Naive thymus-derived CD4-positive, alpha-beta T cell (primary cell): ENCODE measurements at regions of chr2 and their contacts with region 1.

Region 1: GRCh38 chr2:207046724-207047123 is 107.4 kb downstream of the CPO start:
- DNase-seq: peak in 8 of 9 donors; percentile 24 to 69 (median 52)
- ATAC-seq: peak; percentile 79
- H3K4me3 ChIP-seq: no peak overlapping the region
- H3K4me3 Mint-ChIP-seq: peak overlapping the region in 8 of 10 donors; percentile 0 to 66 (median 12)
- H3K27ac ChIP-seq: no peak overlapping the region
- H3K27ac Mint-ChIP-seq: peak overlapping the region; percentile 2 to 78 (median 56)
- H3K4me1 ChIP-seq: peaks cover 0 to 4% of the 10 kb centered on the region in 2 donors
- H3K4me1 Mint-ChIP-seq: peaks cover 11 to 14% (median 13%) of the 10 kb centered on the region in 7 donors
- H3K27me3 ChIP-seq: no peaks in the 10 kb centered on the region
- H3K27me3 Mint-ChIP-seq: peaks cover 0 to 16% (median 0%) of the 10 kb centered on the region in 5 donors

Region 2: GRCh38 chr2:206981739-206982340 is 64.9 kb before region 1 on chr2:
- CTCF ChIA-PET with region 1: interaction called, 3 read pairs
- POLR2A ChIA-PET with region 1: no interaction called
- intact Hi-C with region 1: loop called in 1 of 2 experiments (anchors 1 kb)
- DNase-seq: peak; percentile 12 to 61 (median 39)
- ATAC-seq: peak; percentile 67
- H3K4me3 ChIP-seq: no peak overlapping the region
- H3K4me3 Mint-ChIP-seq: no peak overlapping the region
- H3K27ac ChIP-seq: no peak overlapping the region
- H3K27ac Mint-ChIP-seq: peak overlapping the region in 2 of 9 donors; percentile 46 to 63
- H3K4me1 ChIP-seq: peaks cover 0 to 7% of the 10 kb centered on the region in 2 donors
- H3K4me1 Mint-ChIP-seq: peaks cover 0 to 25% (median 11%) of the 10 kb centered on the region in 7 donors
- H3K27me3 ChIP-seq: no peaks in the 10 kb centered on the region
- H3K27me3 Mint-ChIP-seq: peaks cover 0 to 6% (median 0%) of the 10 kb centered on the region in 5 donors

Region 3: DNA sequence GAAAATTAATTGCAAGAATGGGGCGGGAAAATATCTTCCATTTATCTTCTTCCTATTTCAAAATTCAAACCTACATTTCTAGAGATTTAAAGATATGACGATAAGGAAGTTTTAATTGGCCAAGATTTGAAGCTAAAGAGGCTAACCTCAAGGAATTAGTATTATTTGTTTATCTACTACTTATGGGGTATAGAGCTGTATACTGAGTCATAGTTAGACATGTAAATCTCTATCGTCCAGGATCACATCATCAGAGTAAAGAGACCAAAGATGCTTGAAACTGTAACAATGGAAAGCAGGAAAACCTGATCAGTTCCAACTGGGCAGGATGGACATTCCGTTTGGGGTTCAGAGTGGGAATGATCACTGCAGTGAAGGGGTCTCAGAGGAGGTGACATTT is 214.2 kb after region 1 on chr2:
- CTCF ChIA-PET with region 1: interaction called, 3 read pairs
- POLR2A ChIA-PET with region 1: no interaction called
- intact Hi-C with region 1: loop called in 1 of 2 experiments (anchors 1 kb)
- DNase-seq: no peak
- ATAC-seq: no peak
- H3K4me3 ChIP-seq: no peak overlapping the region
- H3K4me3 Mint-ChIP-seq: no peak overlapping the region
- H3K27ac ChIP-seq: no peak overlapping the region
- H3K27ac Mint-ChIP-seq: no peak overlapping the region
- H3K4me1 ChIP-seq: no peaks in the 10 kb centered on the region
- H3K4me1 Mint-ChIP-seq: no peaks in the 10 kb centered on the region
- H3K27me3 ChIP-seq: no peaks in the 10 kb centered on the region
- H3K27me3 Mint-ChIP-seq: peaks cover 0 to 4% (median 0%) of the 10 kb centered on the region in 5 donors

Region 4: GRCh38 chr2:207352978-207353671 is 306.4 kb after region 1 on chr2:
- CTCF ChIA-PET with region 1: interaction called, 5 read pairs
- POLR2A ChIA-PET with region 1: no interaction called
- intact Hi-C with region 1: loop called (anchors 1 kb)
- DNase-seq: peak in 5 of 9 donors; percentile 8 to 37 (median 32)
- ATAC-seq: peak; percentile 51
- H3K4me3 ChIP-seq: no peak overlapping the region
- H3K4me3 Mint-ChIP-seq: peak overlapping the region in 2 of 10 donors; percentile 17 to 26
- H3K27ac ChIP-seq: no peak overlapping the region
- H3K27ac Mint-ChIP-seq: peak overlapping the region in 3 of 9 donors; percentile 6 to 65 (median 53)
- H3K4me1 ChIP-seq: no peaks in the 10 kb centered on the region
- H3K4me1 Mint-ChIP-seq: peaks cover 0 to 12% (median 9%) of the 10 kb centered on the region in 7 donors
- H3K27me3 ChIP-seq: no peaks in the 10 kb centered on the region
- H3K27me3 Mint-ChIP-seq: no peaks in the 10 kb centered on the region

Region 5: GRCh38 chr2:207710814-207711740 is 664.4 kb after region 1 on chr2 and contains the start of gene CCNYL1:
- CTCF ChIA-PET with region 1: no interaction called
- POLR2A ChIA-PET with region 1: no interaction called
- intact Hi-C with region 1: loop called in 1 of 2 experiments (anchors 10 kb)
- DNase-seq: peak; percentile 93 to 98 (median 97)
- ATAC-seq: peak; percentile 98
- H3K4me3 ChIP-seq: peak within 1 kb of the TSS; percentile 88
- H3K4me3 Mint-ChIP-seq: peak within 1 kb of the TSS; percentile 94 to 99 (median 97)
- H3K27ac ChIP-seq: peak within 1 kb of the TSS; percentile 83
- H3K27ac Mint-ChIP-seq: peak within 1 kb of the TSS; percentile 83 to 98 (median 93)
- H3K4me1 ChIP-seq: peaks cover 4 to 11% of the 10 kb centered on the region in 2 donors
- H3K4me1 Mint-ChIP-seq: peaks cover 15 to 32% (median 27%) of the 10 kb centered on the region in 7 donors
- H3K27me3 ChIP-seq: no peaks in the 10 kb centered on the region
- H3K27me3 Mint-ChIP-seq: peaks cover 0 to 3% (median 0%) of the 10 kb centered on the region in 5 donors
- total RNA-seq, gene CCNYL1: 6.7 to 16.7 (median 10.7) TPM